ENCODE measurements at regions of chr5 and their contacts with region 1.

Region 1: DNA sequence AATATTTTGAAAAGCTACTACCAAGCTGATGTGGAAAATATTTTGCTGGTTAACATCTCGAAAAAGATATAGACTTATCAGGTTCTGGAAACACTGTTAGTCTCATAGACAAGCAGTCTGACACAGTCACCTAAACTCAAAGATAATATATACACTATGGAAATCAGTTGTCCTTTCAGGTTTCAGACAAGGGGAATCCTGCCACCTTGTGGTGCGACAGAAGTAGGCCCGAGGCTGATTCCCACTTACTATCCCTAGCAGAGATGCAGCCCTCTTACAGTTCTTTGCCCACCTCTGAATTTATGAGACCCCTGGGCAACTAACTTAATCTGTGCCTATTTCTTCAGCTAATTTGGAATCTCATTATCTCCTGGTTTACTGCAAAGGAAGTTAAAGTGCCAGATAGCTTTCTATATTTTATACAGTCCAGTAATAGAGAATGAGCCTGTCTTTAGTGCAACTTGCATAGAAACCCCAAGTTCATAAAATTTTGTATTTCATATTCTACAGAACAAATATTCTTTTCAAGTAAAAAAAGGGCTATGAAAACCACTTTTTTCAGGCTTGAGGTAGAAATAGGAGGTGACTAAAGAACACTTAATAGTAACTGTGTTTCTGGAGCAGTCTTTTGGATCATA is 16.9 kb downstream of the RAD1 start:
- DNase-seq: peak; percentile 77
- H3K4me3 Mint-ChIP-seq: no peak overlapping the region
- H3K27ac Mint-ChIP-seq: no peak overlapping the region
- H3K4me1 Mint-ChIP-seq: no peaks in the 10 kb centered on the region
- H3K27me3 Mint-ChIP-seq: no peaks in the 10 kb centered on the region

Region 2: DNA sequence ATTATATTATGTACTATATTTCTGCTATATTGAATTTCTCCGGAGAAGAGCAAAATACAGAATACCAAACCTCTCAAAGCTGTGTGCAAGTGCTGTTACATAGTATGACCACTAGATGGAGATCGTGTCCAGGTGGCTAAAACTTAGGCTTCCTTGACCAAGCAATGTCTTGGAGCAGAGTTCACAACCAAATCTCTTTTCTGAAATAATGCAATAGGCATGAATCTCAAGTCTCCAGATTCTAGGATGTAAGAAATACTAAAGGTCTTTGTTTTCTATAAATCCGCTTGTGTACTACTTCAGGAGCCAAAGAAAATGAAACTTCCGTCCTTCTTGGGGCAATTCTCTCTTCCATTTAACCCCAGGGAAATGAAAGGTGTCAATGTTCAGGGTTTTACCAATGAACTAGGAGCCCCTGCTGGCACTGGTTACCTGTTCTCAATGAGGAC is 423.8 kb before region 1 on chr5:
- CTCF ChIA-PET with region 1: interaction called, 20 read pairs
- intact Hi-C with region 1: loop called (anchors 1 kb)
- DNase-seq: peak; percentile 34
- H3K4me3 Mint-ChIP-seq: no peak overlapping the region
- H3K27ac Mint-ChIP-seq: no peak overlapping the region
- H3K4me1 Mint-ChIP-seq: no peaks in the 10 kb centered on the region
- H3K27me3 Mint-ChIP-seq: peaks cover 11% of the 10 kb centered on the region

Region 3: GRCh38 chr5:34656001-34656699 is 242.2 kb before region 1 on chr5 and contains the start of gene RAI14:
- CTCF ChIA-PET with region 1: no interaction called
- intact Hi-C with region 1: loop called (anchors 10 kb)
- DNase-seq: peak; percentile 35
- H3K4me3 Mint-ChIP-seq: peak within 1 kb of the TSS; percentile 78
- H3K27ac Mint-ChIP-seq: peak within 1 kb of the TSS; percentile 8
- H3K4me1 Mint-ChIP-seq: peaks cover 17% of the 10 kb centered on the region
- H3K27me3 Mint-ChIP-seq: peaks cover 31% of the 10 kb centered on the region
- total RNA-seq, gene RAI14: 5.8 to 6.7 TPM

Measured in activated naive CD4-positive, alpha-beta T cell treated with anti-CD3 and anti-CD28 coated beads for 36 hours (primary cell).